ENCODE measurements at regions of chr1 and their contacts with region 1.

Region 1: GRCh38 chr1:159780583-159781582 is at the start of gene DUSP23:
- DNase-seq: peak; percentile 96
- H3K4me3 Mint-ChIP-seq: peak within 1 kb of the TSS; percentile 73
- H3K27ac Mint-ChIP-seq: no peak within 1 kb of the TSS
- H3K4me1 Mint-ChIP-seq: peaks cover 7% of the 10 kb centered on the region
- H3K27me3 Mint-ChIP-seq: no peaks in the 10 kb centered on the region
- total RNA-seq, gene DUSP23: 13.0 to 14.1 TPM

Region 2: GRCh38 chr1:158355773-158356285 is 1425.1 kb before region 1 on chr1:
- CTCF ChIA-PET with region 1: no interaction called
- intact Hi-C with region 1: no loop called
- DNase-seq: no peak
- H3K4me3 Mint-ChIP-seq: no peak overlapping the region
- H3K27ac Mint-ChIP-seq: no peak overlapping the region
- H3K4me1 Mint-ChIP-seq: no peaks in the 10 kb centered on the region
- H3K27me3 Mint-ChIP-seq: peaks cover 22% of the 10 kb centered on the region

Region 3: GRCh38 chr1:159132271-159132881 is 648.5 kb before region 1 on chr1:
- CTCF ChIA-PET with region 1: no interaction called
- intact Hi-C with region 1: loop called (anchors 10 kb)
- DNase-seq: peak; percentile 84
- H3K4me3 Mint-ChIP-seq: no peak overlapping the region
- H3K27ac Mint-ChIP-seq: no peak overlapping the region
- H3K4me1 Mint-ChIP-seq: no peaks in the 10 kb centered on the region
- H3K27me3 Mint-ChIP-seq: peaks cover 6% of the 10 kb centered on the region

Region 4: GRCh38 chr1:159554696-159555095 is 226.2 kb before region 1 on chr1:
- CTCF ChIA-PET with region 1: no interaction called
- intact Hi-C with region 1: no loop called
- DNase-seq: no peak
- H3K4me3 Mint-ChIP-seq: no peak overlapping the region
- H3K27ac Mint-ChIP-seq: no peak overlapping the region
- H3K4me1 Mint-ChIP-seq: no peaks in the 10 kb centered on the region
- H3K27me3 Mint-ChIP-seq: peaks cover 7% of the 10 kb centered on the region

Region 5: GRCh38 chr1:159829273-159829634 is 48.4 kb after region 1 on chr1:
- CTCF ChIA-PET with region 1: no interaction called
- intact Hi-C with region 1: loop called (anchors 5 kb)
- DNase-seq: no peak
- H3K4me3 Mint-ChIP-seq: no peak overlapping the region
- H3K27ac Mint-ChIP-seq: no peak overlapping the region
- H3K4me1 Mint-ChIP-seq: peaks cover 34% of the 10 kb centered on the region
- H3K27me3 Mint-ChIP-seq: no peaks in the 10 kb centered on the region

Region 6: GRCh38 chr1:159854693-159855192 is 73.9 kb after region 1 on chr1:
- CTCF ChIA-PET with region 1: interaction called, 3 read pairs
- intact Hi-C with region 1: loop called (anchors 1 kb)
- DNase-seq: peak; percentile 73
- H3K4me3 Mint-ChIP-seq: peak overlapping the region; percentile 81
- H3K27ac Mint-ChIP-seq: no peak overlapping the region
- H3K4me1 Mint-ChIP-seq: peaks cover 10% of the 10 kb centered on the region
- H3K27me3 Mint-ChIP-seq: no peaks in the 10 kb centered on the region

Region 7: DNA sequence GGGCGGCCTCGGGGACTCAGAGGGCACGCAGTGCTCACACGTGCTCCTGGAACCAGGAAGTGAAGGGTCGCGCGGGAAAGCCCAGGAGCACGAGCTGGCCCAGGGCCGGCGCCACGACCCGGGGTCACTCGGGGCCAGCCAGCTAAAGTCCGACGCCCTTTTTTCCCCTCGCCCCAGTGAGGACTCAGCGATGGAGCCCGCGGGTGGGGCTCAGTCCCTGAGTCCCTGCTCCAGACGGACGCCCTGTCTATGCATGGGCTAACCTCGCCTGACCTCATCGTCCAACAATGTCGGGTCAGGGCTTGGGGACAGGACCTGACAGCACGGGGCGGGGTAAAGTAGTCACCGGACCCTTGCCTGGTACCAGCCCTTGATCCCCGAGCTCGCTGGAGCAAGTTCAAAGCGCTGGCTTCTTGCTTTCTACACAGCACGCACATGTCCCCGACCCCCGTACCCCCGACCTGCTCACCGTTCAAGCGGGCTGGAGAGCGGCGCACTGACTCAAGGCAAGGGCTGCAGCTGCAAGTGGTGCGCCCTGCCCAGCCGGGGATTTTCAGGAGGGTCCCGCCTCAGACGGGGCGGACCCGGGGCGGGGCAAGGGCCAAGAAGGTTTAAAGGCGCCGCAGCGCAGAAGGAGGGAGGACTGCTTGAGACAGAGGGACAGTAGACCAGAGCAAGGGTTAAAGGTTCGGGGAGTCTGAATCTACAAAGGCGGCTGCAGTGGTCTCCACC is 144.3 kb after region 1 on chr1 and contains the start of gene TAGLN2:
- CTCF ChIA-PET with region 1: no interaction called
- intact Hi-C with region 1: loop called (anchors 1 kb)
- DNase-seq: peak; percentile 89
- H3K4me3 Mint-ChIP-seq: peak within 1 kb of the TSS; percentile 91
- H3K27ac Mint-ChIP-seq: peak within 1 kb of the TSS; percentile 93
- H3K4me1 Mint-ChIP-seq: peaks cover 42% of the 10 kb centered on the region
- H3K27me3 Mint-ChIP-seq: no peaks in the 10 kb centered on the region
- total RNA-seq, gene TAGLN2: 453 to 454 TPM

Region 8: GRCh38 chr1:160078512-160079195 is 297.8 kb after region 1 on chr1:
- CTCF ChIA-PET with region 1: no interaction called
- intact Hi-C with region 1: loop called (anchors 2 kb)
- DNase-seq: peak; percentile 77
- H3K4me3 Mint-ChIP-seq: no peak overlapping the region
- H3K27ac Mint-ChIP-seq: no peak overlapping the region
- H3K4me1 Mint-ChIP-seq: no peaks in the 10 kb centered on the region
- H3K27me3 Mint-ChIP-seq: peaks cover 40% of the 10 kb centered on the region

Measured in activated naive CD4-positive, alpha-beta T cell treated with anti-CD3 and anti-CD28 coated beads for 36 hours (primary cell).